ENCODE measurements at regions of chr13 and their contacts with region 1.

Region 1: DNA sequence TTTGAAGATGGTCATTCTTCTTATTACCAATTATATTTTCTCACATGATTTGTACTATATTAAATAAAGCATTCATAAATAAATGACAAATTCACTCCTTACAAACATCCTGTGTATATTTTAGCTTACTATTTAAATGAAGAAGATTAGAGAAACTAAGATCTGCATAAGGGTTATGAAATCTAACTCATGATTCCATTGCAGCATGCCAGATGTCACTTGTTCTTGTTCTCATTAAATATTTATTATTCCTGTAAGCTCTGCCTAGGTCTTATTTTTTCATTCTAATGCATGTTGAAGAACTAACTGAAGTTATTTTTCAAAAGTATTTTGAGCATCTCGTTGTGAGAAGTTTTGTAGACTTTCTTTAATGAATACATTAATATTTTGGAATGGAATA is 18.3 kb downstream of the NUP58 start:
- DNase-seq: no peak
- ATAC-seq: no peak
- H3K4me3 ChIP-seq: no peak overlapping the region
- H3K4me3 Mint-ChIP-seq: no peak overlapping the region
- H3K27ac ChIP-seq: no peak overlapping the region
- H3K27ac Mint-ChIP-seq: no peak overlapping the region
- H3K4me1 ChIP-seq: no peaks in the 10 kb centered on the region
- H3K4me1 Mint-ChIP-seq: peaks cover 0 to 15% (median 6%) of the 10 kb centered on the region in 7 donors
- H3K27me3 ChIP-seq: no peaks in the 10 kb centered on the region
- H3K27me3 Mint-ChIP-seq: no peaks in the 10 kb centered on the region

Region 2: DNA sequence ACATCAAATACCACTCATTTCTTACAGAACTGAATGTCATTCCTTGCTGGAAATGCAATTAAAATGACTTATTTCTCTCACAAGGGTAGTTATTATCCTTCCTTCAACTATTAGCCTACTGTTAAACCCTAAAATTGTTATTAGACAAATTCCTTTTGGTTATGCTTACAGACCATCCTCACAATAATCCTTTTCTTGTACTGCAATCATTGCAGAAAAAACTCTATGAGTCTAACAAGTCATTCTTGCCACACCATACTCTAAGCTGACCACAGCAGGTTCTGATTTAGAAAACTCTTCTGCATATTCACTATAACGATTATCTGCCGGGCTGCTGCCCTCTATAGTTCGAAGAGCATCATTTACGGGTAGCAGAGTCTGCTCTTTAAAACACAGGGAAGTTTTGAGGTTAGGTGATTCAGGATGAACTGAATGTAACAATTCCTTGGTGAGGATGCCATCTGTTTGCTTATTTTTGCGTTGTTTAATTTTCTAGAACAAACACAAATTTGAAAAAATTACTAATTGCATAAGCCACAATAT is 70.7 kb before region 1 on chr13:
- CTCF ChIA-PET with region 1: no interaction called
- POLR2A ChIA-PET with region 1: no interaction called
- intact Hi-C with region 1: loop called in 1 of 2 experiments (anchors 5 kb)
- DNase-seq: no peak
- ATAC-seq: peak; percentile 63
- H3K4me3 ChIP-seq: no peak overlapping the region
- H3K4me3 Mint-ChIP-seq: no peak overlapping the region
- H3K27ac ChIP-seq: no peak overlapping the region
- H3K27ac Mint-ChIP-seq: no peak overlapping the region
- H3K4me1 ChIP-seq: no peaks in the 10 kb centered on the region
- H3K4me1 Mint-ChIP-seq: peaks cover 0 to 3% (median 0%) of the 10 kb centered on the region in 7 donors
- H3K27me3 ChIP-seq: no peaks in the 10 kb centered on the region
- H3K27me3 Mint-ChIP-seq: no peaks in the 10 kb centered on the region

Region 3: DNA sequence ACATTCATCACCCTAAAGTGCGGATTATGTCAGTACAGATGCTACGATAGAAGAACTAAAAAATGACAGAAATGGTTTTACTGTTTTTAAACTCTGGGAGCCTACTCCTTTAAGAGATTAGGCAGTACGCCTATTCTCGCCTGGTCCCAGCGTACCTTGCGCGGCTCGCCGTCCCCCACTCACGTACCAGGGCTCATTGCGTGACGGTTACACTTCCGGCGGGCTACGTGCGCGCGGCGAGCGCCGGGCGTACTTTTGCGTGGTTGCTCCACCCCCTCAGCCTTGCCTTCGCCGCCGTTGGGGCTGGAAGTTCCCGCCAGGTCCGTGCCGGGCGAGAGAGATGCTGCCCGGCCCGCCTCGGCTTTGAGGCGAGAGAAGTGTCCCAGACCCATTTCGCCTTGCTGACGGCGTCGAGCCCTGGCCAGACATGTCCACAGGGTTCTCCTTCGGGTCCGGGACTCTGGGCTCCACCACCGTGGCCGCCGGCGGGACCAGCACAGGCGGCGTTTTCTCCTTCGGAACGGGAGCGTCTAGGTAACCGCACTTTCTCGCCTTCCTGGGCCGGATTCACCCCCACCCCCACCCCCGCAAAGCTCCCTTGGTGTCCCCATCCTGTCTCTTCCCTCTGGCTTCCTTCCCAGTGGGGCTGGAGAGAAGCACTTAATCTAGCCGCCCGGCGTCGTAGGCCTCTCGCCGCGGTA is 18.3 kb before region 1 on chr13 and contains the start of gene NUP58:
- CTCF ChIA-PET with region 1: no interaction called
- POLR2A ChIA-PET with region 1: no interaction called
- intact Hi-C with region 1: loop called in 1 of 2 experiments (anchors 2 kb)
- DNase-seq: peak; percentile 83 to 94 (median 92)
- ATAC-seq: peak; percentile 99
- H3K4me3 ChIP-seq: peak within 1 kb of the TSS; percentile 64
- H3K4me3 Mint-ChIP-seq: peak within 1 kb of the TSS; percentile 86 to 95 (median 92)
- H3K27ac ChIP-seq: peak within 1 kb of the TSS; percentile 93
- H3K27ac Mint-ChIP-seq: peak within 1 kb of the TSS; percentile 87 to 97 (median 93)
- H3K4me1 ChIP-seq: peaks cover 13 to 22% of the 10 kb centered on the region in 2 donors
- H3K4me1 Mint-ChIP-seq: peaks cover 21 to 51% (median 47%) of the 10 kb centered on the region in 7 donors
- H3K27me3 ChIP-seq: peaks cover 0 to 5% of the 10 kb centered on the region in 2 donors
- H3K27me3 Mint-ChIP-seq: peaks cover 7 to 19% (median 10%) of the 10 kb centered on the region in 5 donors
- total RNA-seq, gene NUP58: 41.1 to 89.1 (median 57.0) TPM

Region 4: DNA sequence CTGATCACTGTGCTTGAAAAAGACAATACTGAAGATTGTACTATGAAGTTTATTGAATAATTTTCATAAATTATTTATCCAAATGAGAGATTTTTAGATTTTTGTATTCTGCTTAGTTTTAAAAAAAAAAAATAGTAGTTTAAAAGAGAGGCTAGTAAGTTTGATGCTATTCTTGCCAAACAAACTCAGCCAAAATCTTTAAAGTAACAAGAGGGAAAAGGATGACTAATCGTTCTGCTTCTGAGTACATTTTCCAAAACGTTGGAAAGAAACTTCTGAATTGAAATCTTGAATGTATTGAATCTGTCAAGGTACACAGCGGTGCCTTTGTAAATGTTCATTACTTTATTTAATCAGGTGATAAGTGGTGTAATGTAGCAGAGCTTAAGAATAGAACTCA is 16.1 kb after region 1 on chr13:
- CTCF ChIA-PET with region 1: no interaction called
- POLR2A ChIA-PET with region 1: no interaction called
- intact Hi-C with region 1: loop called in 1 of 2 experiments (anchors 2 kb)
- DNase-seq: no peak
- ATAC-seq: no peak
- H3K4me3 ChIP-seq: no peak overlapping the region
- H3K4me3 Mint-ChIP-seq: no peak overlapping the region
- H3K27ac ChIP-seq: no peak overlapping the region
- H3K27ac Mint-ChIP-seq: peak overlapping the region in 2 of 9 donors; percentile 52 to 63
- H3K4me1 ChIP-seq: no peaks in the 10 kb centered on the region
- H3K4me1 Mint-ChIP-seq: peaks cover 0 to 14% (median 4%) of the 10 kb centered on the region in 7 donors
- H3K27me3 ChIP-seq: no peaks in the 10 kb centered on the region
- H3K27me3 Mint-ChIP-seq: no peaks in the 10 kb centered on the region

Measured in naive thymus-derived CD4-positive, alpha-beta T cell (primary cell).